Naive thymus-derived CD8-positive, alpha-beta T cell (primary cell): ENCODE measurements at regions of chr6 and their contacts with region 1.

Region 1: GRCh38 chr6:42453031-42453653 is 1.4 kb upstream of the TRERF1 start:
- DNase-seq: peak; percentile 63 to 89 (median 72)
- ATAC-seq: peak; percentile 75 to 76
- H3K4me3 Mint-ChIP-seq: peak overlapping the region; percentile 87 to 100 (median 94)
- H3K27ac Mint-ChIP-seq: peak overlapping the region in 9 of 10 donors; percentile 37 to 88 (median 73)
- H3K4me1 Mint-ChIP-seq: peaks cover 24 to 43% (median 37%) of the 10 kb centered on the region in 4 donors
- H3K27me3 Mint-ChIP-seq: no peaks in the 10 kb centered on the region

Region 2: DNA sequence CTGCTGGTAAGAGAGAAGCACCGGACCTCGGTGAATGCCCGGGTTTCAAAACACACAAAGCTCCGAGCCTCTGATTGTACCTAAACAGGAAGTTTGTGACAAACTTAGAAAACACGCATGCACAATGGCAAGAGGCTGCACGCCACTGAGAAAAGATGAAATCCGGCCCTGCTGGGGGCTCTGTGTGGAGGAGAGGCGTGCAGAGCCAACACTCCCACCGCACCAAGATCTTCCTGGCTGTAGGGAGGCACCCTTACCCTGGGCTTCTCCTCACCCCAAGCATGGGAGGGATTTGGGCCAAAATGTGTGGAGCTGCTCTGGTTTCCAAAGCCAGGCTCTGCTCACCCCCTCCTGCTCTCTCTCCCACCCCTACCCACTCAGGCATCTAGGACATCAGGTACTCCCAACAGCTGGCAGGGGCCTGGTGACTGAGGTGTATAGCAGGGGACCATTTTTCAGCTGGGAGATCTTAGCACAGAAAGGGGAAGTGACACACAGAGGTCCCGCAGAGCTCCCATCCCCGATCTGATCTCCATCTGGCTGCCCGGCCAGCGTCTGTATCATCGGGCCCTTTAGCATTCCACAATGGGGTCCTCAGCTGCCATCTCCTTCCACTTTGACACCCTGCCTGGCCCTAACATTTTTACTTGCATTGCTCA is 85.7 kb before region 1 on chr6:
- POLR2A ChIA-PET with region 1: interaction called, 49 read pairs
- DNase-seq: peak in 1 of 10 donors; percentile 39
- ATAC-seq: peak; percentile 60 to 73
- H3K4me3 Mint-ChIP-seq: peak overlapping the region; percentile 71 to 90 (median 78)
- H3K27ac Mint-ChIP-seq: peak overlapping the region; percentile 88 to 96 (median 93)
- H3K4me1 Mint-ChIP-seq: peaks cover 53 to 90% (median 84%) of the 10 kb centered on the region in 4 donors
- H3K27me3 Mint-ChIP-seq: no peaks in the 10 kb centered on the region

Region 3: DNA sequence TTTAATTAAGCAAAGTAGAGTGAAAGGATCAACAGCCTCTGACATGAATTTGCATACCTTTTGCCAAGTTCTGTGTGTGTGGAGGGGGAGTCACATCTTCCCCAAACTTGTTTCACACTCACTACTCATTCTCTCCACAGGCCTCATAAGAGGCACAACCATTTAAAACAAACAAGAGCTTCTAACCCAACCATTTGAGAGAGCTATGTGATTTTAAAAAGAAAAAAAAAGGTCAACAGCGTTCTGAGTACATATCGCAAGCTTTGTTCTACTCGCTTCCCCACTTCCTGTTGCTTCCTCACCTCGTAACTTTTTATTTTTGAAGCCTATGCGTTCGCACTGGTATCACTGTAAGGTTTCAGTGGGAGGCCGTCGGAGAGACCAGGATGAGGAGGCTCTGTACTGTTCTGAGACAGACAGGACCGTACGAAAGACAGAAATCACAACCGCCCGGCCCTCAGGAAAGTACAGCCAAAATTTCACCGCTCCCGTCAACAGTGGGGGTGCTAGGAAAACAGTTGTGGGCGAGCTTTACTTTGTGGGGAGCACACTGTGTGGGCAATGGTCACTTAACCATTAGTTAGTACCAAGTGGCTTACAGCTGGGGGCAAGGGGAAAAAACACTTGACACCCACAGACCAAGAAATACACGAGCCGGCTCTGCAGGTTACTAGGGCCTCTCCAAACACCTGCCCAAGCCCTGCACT is 62.8 kb before region 1 on chr6:
- POLR2A ChIA-PET with region 1: interaction called, 199 read pairs
- DNase-seq: peak in 8 of 10 donors; percentile 34 to 88 (median 74)
- ATAC-seq: peak; percentile 77 to 81
- H3K4me3 Mint-ChIP-seq: peak overlapping the region; percentile 64 to 91 (median 78)
- H3K27ac Mint-ChIP-seq: peak overlapping the region; percentile 95 to 100 (median 99)
- H3K4me1 Mint-ChIP-seq: peaks cover 58 to 99% (median 99%) of the 10 kb centered on the region in 4 donors
- H3K27me3 Mint-ChIP-seq: no peaks in the 10 kb centered on the region

Region 4: DNA sequence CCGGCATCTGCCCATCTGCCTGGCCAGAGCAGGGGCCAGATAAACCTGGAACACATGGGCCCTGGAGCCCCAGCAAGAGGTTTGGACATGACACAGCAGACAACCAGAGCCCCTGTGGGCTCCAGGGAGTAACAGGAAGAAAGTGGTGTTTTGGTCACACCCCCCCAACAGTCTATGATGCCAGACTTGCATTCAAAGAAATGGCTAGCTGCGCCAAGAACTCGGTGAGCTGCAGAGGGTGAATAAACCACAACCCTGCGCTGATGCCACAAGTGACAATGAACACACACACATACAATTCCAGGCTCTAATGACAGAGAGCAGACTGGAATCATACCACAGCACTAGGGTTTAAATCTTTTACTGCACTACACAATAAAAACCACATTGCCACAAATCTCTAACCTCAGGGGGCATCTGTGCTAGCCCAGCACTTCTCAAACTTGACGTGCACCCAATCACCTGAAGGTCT is 35.5 kb before region 1 on chr6:
- POLR2A ChIA-PET with region 1: interaction called, 20 read pairs
- DNase-seq: peak in 9 of 10 donors; percentile 20 to 68 (median 60)
- ATAC-seq: peak; percentile 85 to 90
- H3K4me3 Mint-ChIP-seq: peak overlapping the region; percentile 9 to 80 (median 68)
- H3K27ac Mint-ChIP-seq: peak overlapping the region in 9 of 10 donors; percentile 79 to 90 (median 85)
- H3K4me1 Mint-ChIP-seq: peaks cover 35 to 77% (median 72%) of the 10 kb centered on the region in 4 donors
- H3K27me3 Mint-ChIP-seq: no peaks in the 10 kb centered on the region

Region 5: GRCh38 chr6:42428326-42429041 is 24.7 kb before region 1 on chr6:
- POLR2A ChIA-PET with region 1: interaction called, 16 read pairs
- DNase-seq: no peak
- ATAC-seq: peak; percentile 61 to 64
- H3K4me3 Mint-ChIP-seq: peak overlapping the region in 8 of 10 donors; percentile 41 to 81 (median 60)
- H3K27ac Mint-ChIP-seq: peak overlapping the region; percentile 56 to 96 (median 83)
- H3K4me1 Mint-ChIP-seq: peaks cover 35 to 64% (median 60%) of the 10 kb centered on the region in 4 donors
- H3K27me3 Mint-ChIP-seq: no peaks in the 10 kb centered on the region

Region 6: GRCh38 chr6:42547407-42548329 is 94.5 kb after region 1 on chr6:
- POLR2A ChIA-PET with region 1: interaction called, 11 read pairs
- DNase-seq: peak; percentile 70 to 93 (median 88)
- ATAC-seq: peak; percentile 99
- H3K4me3 Mint-ChIP-seq: peak overlapping the region; percentile 65 to 82 (median 70)
- H3K27ac Mint-ChIP-seq: peak overlapping the region; percentile 44 to 94 (median 64)
- H3K4me1 Mint-ChIP-seq: peaks cover 2 to 13% (median 12%) of the 10 kb centered on the region in 4 donors
- H3K27me3 Mint-ChIP-seq: peaks cover 2 to 12% (median 7%) of the 10 kb centered on the region in 5 donors